PC-9 (cell line): ENCODE measurements at regions of chr12 and their contacts with region 1.

Region 1: GRCh38 chr12:117587631-117588287 is 226.3 kb upstream of the NOS1 start:
- DNase-seq: peak in 1 of 2 experiments; percentile 31
- H3K4me3 ChIP-seq: no peak overlapping the region
- H3K27ac ChIP-seq: no peak overlapping the region
- H3K4me1 ChIP-seq: no peaks in the 10 kb centered on the region
- H3K27me3 ChIP-seq: peaks cover 31% of the 10 kb centered on the region
- CTCF ChIP-seq: peak; percentile 85

Region 2: DNA sequence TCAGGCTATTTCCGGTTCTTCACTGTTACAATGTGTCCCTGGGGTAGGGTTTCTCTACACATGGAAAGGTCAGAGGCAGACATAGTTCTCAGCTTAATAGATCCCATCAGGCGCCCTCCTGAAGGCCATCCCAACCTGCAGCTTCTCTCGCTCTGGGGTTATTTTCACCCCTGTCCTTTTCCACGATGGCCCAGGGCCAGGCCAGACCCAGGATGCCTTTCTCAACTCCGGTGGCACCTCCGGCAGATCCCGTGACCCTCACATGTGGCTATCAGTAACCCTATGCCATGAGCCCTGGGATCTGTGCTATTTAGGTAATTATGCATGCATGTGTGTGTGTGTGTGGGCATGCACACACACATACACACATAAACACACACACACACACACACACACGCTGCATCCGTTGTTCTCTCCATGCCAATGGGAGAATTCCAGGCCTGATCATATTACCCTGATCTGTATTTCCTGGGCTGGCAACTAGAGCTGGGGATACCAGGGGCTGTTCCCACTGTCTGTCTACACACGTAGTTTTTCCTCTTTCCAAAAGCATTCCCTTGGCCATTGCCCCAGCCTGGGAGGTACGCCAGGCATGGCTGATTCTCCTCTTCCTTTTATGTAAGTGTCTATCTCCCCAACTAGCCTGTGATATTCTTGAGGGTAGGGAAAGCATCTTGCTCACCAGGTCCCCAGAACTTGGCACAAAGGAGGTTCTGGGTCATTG is 175.1 kb before region 1 on chr12:
- CTCF ChIA-PET with region 1: no interaction called
- POLR2A ChIA-PET with region 1: no interaction called
- intact Hi-C with region 1: no loop called
- DNase-seq: no peak
- H3K4me3 ChIP-seq: no peak overlapping the region
- H3K27ac ChIP-seq: no peak overlapping the region
- H3K4me1 ChIP-seq: no peaks in the 10 kb centered on the region
- H3K27me3 ChIP-seq: peaks cover 62% of the 10 kb centered on the region
- CTCF ChIP-seq: no peak

Region 3: DNA sequence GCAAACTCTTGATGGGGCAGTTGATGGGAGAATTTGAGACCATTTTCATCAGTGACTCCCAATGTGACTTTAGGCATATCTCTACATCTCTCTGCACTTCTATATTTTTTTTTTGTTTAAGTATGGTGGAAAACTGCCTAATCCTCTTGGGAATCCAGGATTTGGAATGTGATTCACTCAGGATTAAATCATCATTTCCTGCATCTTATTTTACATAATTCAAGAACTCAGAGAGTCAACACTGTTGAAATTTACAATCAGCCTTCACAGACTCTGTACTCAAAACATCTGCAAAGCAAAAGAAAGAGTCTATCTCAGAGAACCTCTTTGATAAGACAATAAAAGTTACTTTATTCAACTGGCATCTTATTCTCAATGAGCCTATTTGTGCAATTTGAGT is 34.3 kb after region 1 on chr12:
- CTCF ChIA-PET with region 1: no interaction called
- POLR2A ChIA-PET with region 1: no interaction called
- intact Hi-C with region 1: no loop called
- DNase-seq: no peak
- H3K4me3 ChIP-seq: no peak overlapping the region
- H3K27ac ChIP-seq: no peak overlapping the region
- H3K4me1 ChIP-seq: no peaks in the 10 kb centered on the region
- H3K27me3 ChIP-seq: no peaks in the 10 kb centered on the region; the same call in 1 of the 2 replicates
- CTCF ChIP-seq: no peak

Region 4: DNA sequence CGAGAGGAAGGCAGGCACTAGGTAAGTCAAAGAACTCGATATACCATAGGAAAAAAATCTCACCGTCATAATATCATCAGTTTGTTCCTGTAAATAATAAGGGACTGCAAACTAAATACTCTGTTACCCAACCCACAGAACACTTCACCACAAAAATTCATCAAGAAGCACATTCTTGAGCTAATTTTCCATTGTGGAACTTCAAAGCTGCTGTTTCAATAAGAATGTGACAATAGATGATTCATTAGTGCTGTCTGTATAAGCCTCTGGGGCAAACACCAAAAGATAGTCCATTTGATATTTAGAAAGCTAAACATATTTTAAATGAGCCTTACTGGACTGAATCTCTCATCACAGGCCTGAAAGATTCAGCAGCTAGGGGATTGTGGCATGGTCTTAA is 161.7 kb after region 1 on chr12:
- CTCF ChIA-PET with region 1: no interaction called
- POLR2A ChIA-PET with region 1: no interaction called
- intact Hi-C with region 1: loop called (anchors 2 kb)
- DNase-seq: peak in 1 of 2 experiments; percentile 44
- H3K4me3 ChIP-seq: no peak overlapping the region
- H3K27ac ChIP-seq: no peak overlapping the region
- H3K4me1 ChIP-seq: no peaks in the 10 kb centered on the region
- H3K27me3 ChIP-seq: peaks cover 8% of the 10 kb centered on the region; the same call in 1 of the 2 replicates
- CTCF ChIP-seq: no peak